AG04450 (cell line): ENCODE measurements at regions of chr1 and their contacts with region 1.

Region 1: GRCh38 chr1:20212685-20213331 is 26.5 kb upstream of the PLA2G2C start:
- DNase-seq: peak; percentile 18
- H3K4me3 ChIP-seq: no peak overlapping the region
- H3K27ac ChIP-seq: no peak overlapping the region
- H3K27me3 ChIP-seq: peaks cover 23% of the 10 kb centered on the region
- CTCF ChIP-seq: peak; percentile 86

Region 2: GRCh38 chr1:19974822-19975416 is 237.9 kb before region 1 on chr1:
- CTCF ChIA-PET with region 1: interaction called, 15 read pairs
- POLR2A ChIA-PET with region 1: no interaction called
- DNase-seq: peak; percentile 42
- H3K4me3 ChIP-seq: no peak overlapping the region; the same call in 1 of the 2 replicates
- H3K27ac ChIP-seq: no peak overlapping the region
- H3K27me3 ChIP-seq: peaks cover 16% of the 10 kb centered on the region
- CTCF ChIP-seq: peak; percentile 99

Region 3: DNA sequence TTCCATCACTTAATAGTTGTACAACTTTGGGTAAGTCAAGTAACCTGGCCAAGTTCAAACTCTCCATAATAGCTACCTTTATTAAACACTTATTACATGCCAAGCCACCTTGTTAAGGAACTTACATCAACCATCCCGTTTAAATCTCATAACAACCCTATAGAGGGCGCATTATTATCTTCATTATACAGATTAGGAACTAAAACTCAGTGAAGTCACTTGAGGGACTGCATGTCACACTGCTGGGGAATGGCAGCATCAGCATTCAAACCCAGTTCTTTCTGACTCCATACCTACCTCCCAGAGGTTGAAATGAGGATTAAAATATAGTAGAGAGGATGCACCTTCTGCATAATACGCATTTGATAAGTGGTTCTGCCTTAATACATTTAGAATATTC is 20.6 kb after region 1 on chr1:
- CTCF ChIA-PET with region 1: interaction called, 24 read pairs
- POLR2A ChIA-PET with region 1: no interaction called
- DNase-seq: no peak
- H3K4me3 ChIP-seq: no peak overlapping the region
- H3K27ac ChIP-seq: no peak overlapping the region
- H3K27me3 ChIP-seq: peaks cover 40% of the 10 kb centered on the region
- CTCF ChIP-seq: peak; percentile 55

Region 4: DNA sequence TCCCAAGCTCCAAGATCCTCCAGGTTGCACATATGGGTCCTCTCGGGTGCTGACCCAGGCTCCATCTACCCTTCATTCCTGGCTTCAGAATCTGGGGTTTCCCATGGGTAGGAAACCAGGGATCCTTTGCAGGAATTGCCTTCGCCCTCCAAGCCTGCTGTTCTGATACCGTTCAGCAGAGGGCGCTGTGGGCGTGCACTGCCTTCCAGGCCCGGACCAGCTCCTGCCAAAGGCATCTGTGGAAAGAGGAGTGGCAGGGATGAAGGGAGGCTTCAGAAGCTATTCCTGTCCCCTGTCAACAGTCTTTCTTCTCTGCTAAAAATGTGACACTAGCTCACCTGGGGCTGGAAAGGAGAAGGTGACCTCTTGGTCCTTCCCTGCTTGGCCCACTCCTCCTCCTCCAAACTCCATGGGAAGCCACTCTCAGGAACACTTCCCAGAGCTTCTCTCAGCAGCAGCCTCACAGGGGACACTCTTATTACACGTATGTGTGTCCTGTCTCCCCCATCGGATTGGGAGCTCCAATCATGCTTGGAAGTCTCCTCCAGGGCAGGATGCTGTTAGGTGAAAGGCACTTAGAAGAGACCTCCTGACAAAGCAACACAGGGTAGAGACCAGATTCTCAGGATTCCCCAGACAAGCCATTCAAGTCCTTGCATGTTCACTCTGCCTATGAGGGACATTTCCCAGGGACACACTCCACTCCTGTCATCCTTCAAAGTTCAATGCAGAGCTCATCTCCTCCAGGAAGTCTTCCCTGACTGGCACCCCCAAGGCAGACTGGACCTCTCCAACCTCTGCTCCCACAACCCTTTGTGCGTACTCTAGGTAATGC is 149.2 kb after region 1 on chr1:
- CTCF ChIA-PET with region 1: interaction called, 16 read pairs
- POLR2A ChIA-PET with region 1: no interaction called
- DNase-seq: no peak
- H3K4me3 ChIP-seq: no peak overlapping the region
- H3K27ac ChIP-seq: no peak overlapping the region
- H3K27me3 ChIP-seq: peaks cover 52% of the 10 kb centered on the region
- CTCF ChIP-seq: peak; percentile 84

Region 5: GRCh38 chr1:20411196-20411980 is 198.6 kb after region 1 on chr1:
- CTCF ChIA-PET with region 1: interaction called, 10 read pairs
- POLR2A ChIA-PET with region 1: no interaction called
- DNase-seq: peak; percentile 79
- H3K4me3 ChIP-seq: no peak overlapping the region
- H3K27ac ChIP-seq: peak overlapping the region; percentile 69
- H3K27me3 ChIP-seq: no peaks in the 10 kb centered on the region
- CTCF ChIP-seq: no peak

Region 6: DNA sequence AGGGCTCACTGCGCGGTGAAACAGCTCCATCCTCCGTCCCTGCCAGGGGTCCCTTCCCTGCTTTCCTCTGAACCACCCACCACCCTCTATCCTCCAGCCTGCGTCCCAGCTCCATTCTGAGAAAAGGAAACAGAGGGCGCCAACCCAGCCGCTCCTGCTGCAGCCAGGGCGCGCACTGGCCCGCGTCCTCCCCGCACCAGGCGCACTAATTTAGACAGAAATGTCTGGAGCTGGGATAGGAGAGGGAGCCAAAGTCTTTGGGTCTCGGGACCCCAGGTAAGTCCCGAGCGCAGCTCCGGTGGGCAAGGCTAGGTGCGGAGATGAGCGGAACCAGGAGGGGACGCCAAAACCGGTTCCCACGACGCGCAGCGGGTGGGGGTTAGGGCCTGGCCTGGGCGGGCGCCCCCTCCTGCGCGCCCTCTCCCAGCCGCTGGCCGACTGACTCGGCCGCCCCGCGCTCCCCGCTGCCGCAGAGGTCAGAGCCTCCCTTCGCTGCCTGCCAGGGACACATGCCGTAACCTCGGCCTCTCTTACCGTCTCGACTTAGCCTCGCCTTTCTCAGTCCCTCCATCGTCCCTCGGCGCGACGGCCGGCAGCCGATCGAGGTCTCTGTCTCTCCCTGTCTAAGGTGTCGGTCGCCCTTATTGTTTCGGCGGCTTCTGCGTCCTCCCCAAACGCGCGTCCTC is 271.2 kb after region 1 on chr1:
- CTCF ChIA-PET with region 1: interaction called, 30 read pairs
- POLR2A ChIA-PET with region 1: interaction called, 3 read pairs
- DNase-seq: no peak
- H3K4me3 ChIP-seq: peak overlapping the region; percentile 88
- H3K27ac ChIP-seq: peak overlapping the region; percentile 68
- H3K27me3 ChIP-seq: peaks cover 2% of the 10 kb centered on the region
- CTCF ChIP-seq: no peak

Region 7: GRCh38 chr1:20727384-20728316 is 514.8 kb after region 1 on chr1:
- CTCF ChIA-PET with region 1: no interaction called
- POLR2A ChIA-PET with region 1: no interaction called
- DNase-seq: no peak
- H3K4me3 ChIP-seq: no peak overlapping the region
- H3K27ac ChIP-seq: no peak overlapping the region
- H3K27me3 ChIP-seq: no peaks in the 10 kb centered on the region
- CTCF ChIP-seq: no peak